Endothelial cell of umbilical vein (primary cell): ENCODE measurements at regions of chr9 and their contacts with region 1.

Region 1: GRCh38 chr9:95574176-95574575 is 57.4 kb upstream of the PTCH1 start:
- DNase-seq: no peak
- H3K4me3 ChIP-seq: no peak overlapping the region
- H3K27ac ChIP-seq: no peak overlapping the region
- H3K4me1 ChIP-seq: peaks cover 14% of the 10 kb centered on the region
- H3K27me3 ChIP-seq: peaks cover 2 to 5% of the 10 kb centered on the region in 2 experiments
- CTCF ChIP-seq: no peak
- POLR2A ChIP-seq: no peak

Region 2: DNA sequence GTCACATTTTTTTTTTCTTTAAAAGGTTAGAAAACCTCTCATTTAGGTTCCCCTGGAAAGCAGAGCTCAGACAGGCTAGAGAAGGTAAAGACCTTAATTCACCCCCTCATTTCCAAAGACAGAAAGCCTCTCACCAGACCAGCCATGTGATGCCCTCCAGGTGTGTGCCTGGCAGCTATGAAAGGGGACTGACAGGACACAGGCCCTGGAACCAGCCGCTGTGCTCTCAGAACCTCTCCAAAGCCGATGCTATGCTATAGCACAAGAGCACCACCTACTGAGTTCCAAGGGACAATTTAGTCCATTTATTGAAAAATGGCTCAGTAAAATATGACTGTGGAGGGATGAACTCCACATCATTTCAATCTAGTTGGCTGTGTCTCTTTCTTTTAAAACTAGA is 305.5 kb before region 1 on chr9:
- CTCF ChIA-PET with region 1: no interaction called
- POLR2A ChIA-PET with region 1: no interaction called
- dilution Hi-C with region 1: no loop called
- intact Hi-C with region 1: loop called (anchors 5 kb)
- DNase-seq: peak; percentile 47
- H3K4me3 ChIP-seq: no peak overlapping the region
- H3K27ac ChIP-seq: no peak overlapping the region
- H3K4me1 ChIP-seq: no peaks in the 10 kb centered on the region
- H3K27me3 ChIP-seq: no peaks in the 10 kb centered on the region
- CTCF ChIP-seq: peak; percentile 12 to 37
- POLR2A ChIP-seq: no peak

Region 3: GRCh38 chr9:95462249-95463147 is 111.7 kb before region 1 on chr9:
- CTCF ChIA-PET with region 1: no interaction called
- POLR2A ChIA-PET with region 1: no interaction called
- dilution Hi-C with region 1: no loop called
- intact Hi-C with region 1: loop called (anchors 1 kb)
- DNase-seq: peak; percentile 82
- H3K4me3 ChIP-seq: peak overlapping the region in 2 of 3 experiments; percentile 5 to 23
- H3K27ac ChIP-seq: peak overlapping the region; percentile 39
- H3K4me1 ChIP-seq: peaks cover 9% of the 10 kb centered on the region
- H3K27me3 ChIP-seq: no peaks in the 10 kb centered on the region
- CTCF ChIP-seq: no peak
- POLR2A ChIP-seq: no peak

Region 4: GRCh38 chr9:95626885-95627558 is 52.8 kb after region 1 on chr9:
- CTCF ChIA-PET with region 1: no interaction called
- POLR2A ChIA-PET with region 1: no interaction called
- dilution Hi-C with region 1: no loop called
- intact Hi-C with region 1: loop called (anchors 1 kb)
- DNase-seq: peak; percentile 71
- H3K4me3 ChIP-seq: peak overlapping the region in 1 of 3 experiments; percentile 18
- H3K27ac ChIP-seq: peak overlapping the region; percentile 82
- H3K4me1 ChIP-seq: peaks cover 23% of the 10 kb centered on the region
- H3K27me3 ChIP-seq: no peaks in the 10 kb centered on the region
- CTCF ChIP-seq: no peak
- POLR2A ChIP-seq: no peak